ENCODE measurements at regions of chr17 and their contacts with region 1.

Region 1: DNA sequence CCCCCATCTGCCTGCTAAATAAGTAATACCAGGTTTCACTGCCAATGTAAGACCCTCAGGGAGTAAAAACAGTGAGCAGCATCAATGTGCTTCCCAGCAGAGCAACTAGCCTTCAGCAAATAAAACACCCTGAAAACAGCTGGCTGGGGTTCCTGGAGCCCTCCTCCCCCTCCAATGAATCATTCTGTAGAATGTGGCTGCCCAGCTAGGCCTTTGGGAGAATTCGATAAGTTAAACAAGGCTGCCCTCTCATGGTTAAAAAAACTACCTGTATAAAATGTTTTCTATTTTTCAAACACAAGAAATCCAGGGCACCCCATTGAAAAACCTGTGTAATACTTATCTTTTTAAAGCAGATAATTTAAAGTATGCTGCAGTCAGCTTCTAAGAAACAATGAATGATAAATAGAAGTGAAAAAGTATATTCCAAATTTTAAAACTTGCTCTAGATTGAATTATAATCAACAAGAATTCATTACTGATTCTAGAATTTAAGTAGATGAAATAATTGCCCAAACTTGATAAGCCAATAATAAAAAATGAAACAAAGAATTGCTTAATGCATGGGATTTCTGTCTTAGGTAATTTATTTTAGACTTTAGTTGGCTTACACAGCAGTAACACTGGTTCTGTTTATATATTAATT is 9.4 kb upstream of the TOM1L1 start:
- DNase-seq: peak; percentile 70
- H3K4me3 Mint-ChIP-seq: no peak overlapping the region
- H3K27ac Mint-ChIP-seq: no peak overlapping the region
- H3K4me1 Mint-ChIP-seq: peaks cover 5% of the 10 kb centered on the region
- H3K27me3 Mint-ChIP-seq: no peaks in the 10 kb centered on the region
- CTCF ChIP-seq: peak; percentile 52

Region 2: GRCh38 chr17:53313746-53314145 is 1577.6 kb before region 1 on chr17:
- CTCF ChIA-PET with region 1: no interaction called
- POLR2A ChIA-PET with region 1: no interaction called
- intact Hi-C with region 1: loop called (anchors 2 kb)
- DNase-seq: peak; percentile 1
- H3K4me3 Mint-ChIP-seq: no peak overlapping the region
- H3K27ac Mint-ChIP-seq: no peak overlapping the region
- H3K4me1 Mint-ChIP-seq: peaks cover 11% of the 10 kb centered on the region
- H3K27me3 Mint-ChIP-seq: no peaks in the 10 kb centered on the region
- CTCF ChIP-seq: no peak

Region 3: GRCh38 chr17:53516636-53517035 is 1374.7 kb before region 1 on chr17:
- CTCF ChIA-PET with region 1: no interaction called
- POLR2A ChIA-PET with region 1: no interaction called
- intact Hi-C with region 1: loop called (anchors 2 kb)
- DNase-seq: peak; percentile 35
- H3K4me3 Mint-ChIP-seq: no peak overlapping the region
- H3K27ac Mint-ChIP-seq: no peak overlapping the region
- H3K4me1 Mint-ChIP-seq: no peaks in the 10 kb centered on the region
- H3K27me3 Mint-ChIP-seq: no peaks in the 10 kb centered on the region
- CTCF ChIP-seq: peak; percentile 7

Region 4: GRCh38 chr17:54426296-54426886 is 464.9 kb before region 1 on chr17:
- CTCF ChIA-PET with region 1: interaction called, 6 read pairs
- POLR2A ChIA-PET with region 1: no interaction called
- intact Hi-C with region 1: loop called (anchors 5 kb)
- DNase-seq: peak; percentile 24
- H3K4me3 Mint-ChIP-seq: no peak overlapping the region
- H3K27ac Mint-ChIP-seq: no peak overlapping the region
- H3K4me1 Mint-ChIP-seq: no peaks in the 10 kb centered on the region
- H3K27me3 Mint-ChIP-seq: no peaks in the 10 kb centered on the region
- CTCF ChIP-seq: peak; percentile 60

Region 5: GRCh38 chr17:55198690-55199370 is 307.5 kb after region 1 on chr17:
- CTCF ChIA-PET with region 1: no interaction called
- POLR2A ChIA-PET with region 1: no interaction called
- intact Hi-C with region 1: no loop called
- DNase-seq: no peak
- H3K4me3 Mint-ChIP-seq: no peak overlapping the region
- H3K27ac Mint-ChIP-seq: no peak overlapping the region
- H3K4me1 Mint-ChIP-seq: no peaks in the 10 kb centered on the region
- H3K27me3 Mint-ChIP-seq: no peaks in the 10 kb centered on the region
- CTCF ChIP-seq: no peak